ENCODE measurements at regions of chr3 and their contacts with region 1.

Region 1: GRCh38 chr3:63349583-63350521 is 71.7 kb downstream of the SYNPR start:
- DNase-seq: peak; percentile 59 to 82 (median 79)
- H3K4me3 ChIP-seq: no peak overlapping the region
- H3K27ac ChIP-seq: no peak overlapping the region
- H3K4me1 ChIP-seq: no peaks in the 10 kb centered on the region
- H3K27me3 ChIP-seq: peaks cover 0 to 10% (median 4%) of the 10 kb centered on the region in 5 experiments

Region 2: GRCh38 chr3:63364910-63365431 is 15.1 kb after region 1 on chr3:
- CTCF ChIA-PET with region 1: interaction called, 14 read pairs
- POLR2A ChIA-PET with region 1: no interaction called
- DNase-seq: no peak
- H3K4me3 ChIP-seq: no peak overlapping the region
- H3K27ac ChIP-seq: no peak overlapping the region
- H3K4me1 ChIP-seq: no peaks in the 10 kb centered on the region
- H3K27me3 ChIP-seq: peaks cover 0 to 3% (median 0%) of the 10 kb centered on the region in 5 experiments

Region 3: DNA sequence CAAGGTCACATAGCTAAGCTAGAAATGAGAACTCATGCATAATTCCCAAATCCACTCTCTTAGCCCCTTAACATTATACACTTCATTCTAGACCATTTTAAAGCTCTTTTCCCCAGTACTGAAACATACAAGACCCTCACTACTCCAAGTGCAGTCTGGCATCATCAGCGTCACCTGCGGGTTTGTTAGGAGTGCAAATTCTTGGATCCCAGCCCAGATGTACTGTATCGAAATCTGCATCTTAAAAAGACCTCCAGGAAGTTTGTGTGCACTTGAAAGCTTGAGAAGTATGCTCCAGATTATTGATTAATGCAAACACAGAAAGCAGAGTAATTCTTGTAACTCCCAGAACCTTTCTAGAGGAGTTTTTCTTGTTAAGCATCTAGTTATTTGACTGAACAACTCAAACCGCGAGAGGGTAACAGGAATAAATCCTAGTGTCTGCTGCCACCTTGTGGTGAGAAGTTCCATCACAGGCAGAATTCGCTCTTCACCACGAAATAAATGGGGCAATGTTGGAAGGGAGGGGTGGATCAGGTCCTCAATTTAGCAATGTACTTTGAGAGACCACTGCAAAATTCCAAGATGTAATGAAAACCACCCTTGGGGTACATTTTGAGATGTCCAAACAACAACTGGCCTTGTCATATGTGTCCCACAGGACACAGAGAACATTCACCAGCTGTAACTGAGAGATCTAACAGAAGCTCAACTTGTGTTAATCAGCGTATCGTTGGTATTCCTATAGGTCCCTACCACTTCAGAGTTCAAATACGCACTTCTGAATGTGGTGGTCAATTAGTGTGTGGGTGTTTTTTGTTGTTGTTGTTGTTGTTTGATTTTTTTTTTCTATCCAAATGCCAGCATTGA is 468.7 kb after region 1 on chr3:
- CTCF ChIA-PET with region 1: interaction called, 41 read pairs
- POLR2A ChIA-PET with region 1: no interaction called
- DNase-seq: peak; percentile 50 to 74 (median 70)
- H3K4me3 ChIP-seq: no peak overlapping the region
- H3K27ac ChIP-seq: no peak overlapping the region
- H3K4me1 ChIP-seq: no peaks in the 10 kb centered on the region
- H3K27me3 ChIP-seq: no peaks in the 10 kb centered on the region